Tibial artery (tissue), 4 donors: ENCODE measurements at regions of chrX and their contacts with region 1.

Region 1: GRCh38 chrX:57918750-57919436 is 8.6 kb upstream of the ZXDA start:
- DNase-seq: peak in 1 of 2 donors; percentile 59
- H3K4me3 ChIP-seq: no peak overlapping the region
- H3K27ac ChIP-seq: no peak overlapping the region
- H3K4me1 ChIP-seq: no peaks in the 10 kb centered on the region
- H3K27me3 ChIP-seq: no peaks in the 10 kb centered on the region
- CTCF ChIP-seq: peak; percentile 36 to 42

Region 2: DNA sequence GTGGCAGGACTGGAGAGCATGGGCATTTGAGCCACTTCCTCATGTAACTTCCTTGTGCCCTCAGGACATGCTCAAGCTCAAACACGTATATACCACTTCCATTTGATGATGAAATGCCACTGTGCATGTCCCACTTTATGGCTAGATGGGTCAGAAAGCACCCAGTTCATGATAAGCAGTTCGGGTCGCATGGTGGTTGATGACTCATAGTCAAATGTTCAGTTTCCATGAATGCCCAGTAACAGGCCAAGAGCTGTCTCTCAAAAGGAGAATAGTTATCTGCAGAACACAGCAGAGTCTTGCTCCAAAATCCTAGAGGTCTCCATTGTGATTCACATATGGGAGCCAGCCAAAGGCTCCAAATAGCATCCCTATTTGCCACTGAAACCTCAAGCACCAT is 874.6 kb before region 1 on chrX:
- intact Hi-C with region 1: no loop called
- DNase-seq: no peak
- H3K4me3 ChIP-seq: no peak overlapping the region
- H3K27ac ChIP-seq: no peak overlapping the region
- H3K4me1 ChIP-seq: no peaks in the 10 kb centered on the region
- H3K27me3 ChIP-seq: no peaks in the 10 kb centered on the region
- CTCF ChIP-seq: no peak

Region 3: DNA sequence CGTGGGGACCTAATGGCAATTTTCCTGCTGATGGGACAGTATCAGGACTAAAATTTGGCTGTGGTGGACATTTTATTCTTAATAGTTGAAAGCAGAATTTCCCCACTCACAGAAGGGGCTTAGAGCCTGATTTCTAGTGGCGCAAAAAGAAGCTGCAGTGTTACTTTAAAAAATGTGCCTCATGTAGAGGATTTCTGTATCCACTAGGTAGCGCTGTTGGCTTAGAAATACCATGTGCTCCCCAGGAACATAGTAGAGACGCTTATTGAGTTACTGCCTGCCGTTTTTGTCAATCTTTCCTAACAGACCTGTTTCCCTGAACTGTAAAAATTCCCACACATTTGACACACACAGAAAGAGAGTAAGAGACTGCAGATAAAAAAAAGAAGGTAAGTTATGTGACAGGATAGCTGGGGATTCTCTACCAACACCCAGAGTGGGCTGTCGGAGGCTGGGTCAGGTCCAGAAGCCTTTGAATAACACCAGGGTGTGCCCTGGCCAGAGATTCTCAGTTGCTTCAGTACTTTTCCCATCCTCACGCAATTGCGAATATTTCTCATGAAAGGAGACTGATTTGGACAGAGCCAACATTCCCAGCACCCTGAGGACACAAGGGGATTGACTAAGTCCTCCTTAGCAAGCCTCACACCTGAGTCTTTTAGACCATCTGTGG is 97.1 kb before region 1 on chrX:
- intact Hi-C with region 1: loop called (anchors 5 kb)
- DNase-seq: no peak
- H3K4me3 ChIP-seq: peak overlapping the region in 1 of 2 donors; percentile 22
- H3K27ac ChIP-seq: no peak overlapping the region
- H3K4me1 ChIP-seq: peaks cover 0 to 4% (median 2%) of the 10 kb centered on the region in 4 donors
- H3K27me3 ChIP-seq: no peaks in the 10 kb centered on the region
- CTCF ChIP-seq: peak; percentile 51 to 75